CD14-positive monocyte (primary cell): ENCODE measurements at regions of chr1 and their contacts with region 1.

Region 1: GRCh38 chr1:7646981-7647901 is 123.9 kb upstream of the VAMP3 start:
- DNase-seq: peak; percentile 19 to 48 (median 40)
- H3K4me3 ChIP-seq: no peak overlapping the region
- H3K4me3 Mint-ChIP-seq: no peak overlapping the region
- H3K27ac ChIP-seq: no peak overlapping the region
- H3K27ac Mint-ChIP-seq: peak overlapping the region in 1 of 7 donors; percentile 28
- H3K4me1 ChIP-seq: peaks cover 9 to 11% of the 10 kb centered on the region in 2 donors
- H3K4me1 Mint-ChIP-seq: peaks cover 15% of the 10 kb centered on the region
- H3K27me3 ChIP-seq: no peaks in the 10 kb centered on the region
- H3K27me3 Mint-ChIP-seq: peaks cover 4 to 12% (median 9%) of the 10 kb centered on the region in 3 donors
- CTCF ChIP-seq: peak; percentile 95

Region 2: DNA sequence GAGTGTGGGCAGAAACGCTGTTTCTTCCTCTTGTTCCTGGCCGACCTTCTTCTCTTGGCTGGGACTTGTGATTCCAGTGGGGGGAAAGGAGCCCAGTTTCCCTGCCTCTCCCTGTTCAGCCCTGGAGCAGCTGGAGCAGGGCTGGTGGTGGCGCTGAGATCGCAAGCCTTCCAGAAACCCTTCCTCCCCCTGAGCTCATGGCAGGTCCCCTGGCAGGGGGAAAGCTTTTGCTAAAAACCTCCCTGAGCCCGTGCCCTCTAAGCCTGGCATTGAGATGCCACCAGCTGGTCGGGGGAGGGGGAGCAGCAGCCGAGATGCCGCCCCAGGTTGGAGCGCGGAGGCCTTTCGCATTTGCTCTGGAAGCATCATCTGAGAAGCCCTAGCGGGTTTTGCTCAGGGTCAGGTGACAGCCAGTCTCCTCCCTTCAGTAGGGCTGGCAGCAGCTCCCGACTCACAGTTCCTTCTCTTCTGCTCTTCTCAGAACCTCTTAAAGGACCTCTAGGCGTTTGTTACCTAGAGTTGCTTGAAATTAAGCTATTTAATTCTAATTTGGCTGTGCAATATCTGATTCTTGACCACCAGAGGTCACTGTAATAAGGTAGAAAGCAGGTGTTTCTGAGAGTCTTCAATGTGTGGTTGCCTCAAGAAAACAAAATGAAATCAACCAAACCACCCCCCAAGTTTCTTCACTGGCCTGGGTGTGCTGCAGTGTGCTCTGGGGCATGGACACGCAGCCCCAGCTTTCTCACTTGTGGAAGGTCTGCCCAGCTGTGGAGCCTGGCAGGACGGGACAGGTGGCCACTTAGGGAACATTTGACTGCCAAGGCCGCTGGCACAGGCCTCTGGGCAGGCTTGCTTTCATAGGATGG is 604.7 kb before region 1 on chr1:
- intact Hi-C with region 1: loop called in 1 of 2 experiments (anchors 10 kb)
- DNase-seq: no peak
- H3K4me3 ChIP-seq: no peak overlapping the region
- H3K4me3 Mint-ChIP-seq: no peak overlapping the region
- H3K27ac ChIP-seq: no peak overlapping the region
- H3K27ac Mint-ChIP-seq: no peak overlapping the region
- H3K4me1 ChIP-seq: no peaks in the 10 kb centered on the region
- H3K4me1 Mint-ChIP-seq: no peaks in the 10 kb centered on the region
- H3K27me3 ChIP-seq: no peaks in the 10 kb centered on the region
- H3K27me3 Mint-ChIP-seq: peaks cover 3 to 7% (median 6%) of the 10 kb centered on the region in 3 donors
- CTCF ChIP-seq: peak; percentile 46

Region 3: GRCh38 chr1:7719468-7720094 is 72.3 kb after region 1 on chr1:
- intact Hi-C with region 1: no loop called
- DNase-seq: no peak
- H3K4me3 ChIP-seq: no peak overlapping the region
- H3K4me3 Mint-ChIP-seq: no peak overlapping the region
- H3K27ac ChIP-seq: no peak overlapping the region
- H3K27ac Mint-ChIP-seq: no peak overlapping the region
- H3K4me1 ChIP-seq: no peaks in the 10 kb centered on the region
- H3K4me1 Mint-ChIP-seq: no peaks in the 10 kb centered on the region
- H3K27me3 ChIP-seq: no peaks in the 10 kb centered on the region
- H3K27me3 Mint-ChIP-seq: peaks cover 0 to 4% (median 2%) of the 10 kb centered on the region in 3 donors
- CTCF ChIP-seq: no peak

Region 4: GRCh38 chr1:7808253-7808844 is 161.1 kb after region 1 on chr1:
- intact Hi-C with region 1: no loop called
- DNase-seq: peak in 2 of 3 donors; percentile 31 to 36
- H3K4me3 ChIP-seq: no peak overlapping the region
- H3K4me3 Mint-ChIP-seq: no peak overlapping the region
- H3K27ac ChIP-seq: no peak overlapping the region
- H3K27ac Mint-ChIP-seq: peak overlapping the region in 1 of 7 donors; percentile 50
- H3K4me1 ChIP-seq: no peaks in the 10 kb centered on the region
- H3K4me1 Mint-ChIP-seq: peaks cover 6% of the 10 kb centered on the region
- H3K27me3 ChIP-seq: no peaks in the 10 kb centered on the region
- H3K27me3 Mint-ChIP-seq: peaks cover 0 to 1% (median 0%) of the 10 kb centered on the region in 3 donors
- CTCF ChIP-seq: peak; percentile 73